HCT116 (cell line): ENCODE measurements at regions of chr22 and their contacts with region 1.

Region 1: GRCh38 chr22:30423982-30424963 is 1.3 kb upstream of the MTFP1 start:
- DNase-seq: peak; percentile 99
- ATAC-seq: peak; percentile 75
- H3K4me3 ChIP-seq: peak overlapping the region; percentile 82
- H3K27ac ChIP-seq: peak overlapping the region; percentile 98
- H3K4me1 ChIP-seq: peaks cover 42 to 74% of the 10 kb centered on the region in 2 experiments
- H3K27me3 ChIP-seq: no peaks in the 10 kb centered on the region
- CTCF ChIP-seq: peak in 2 of 3 experiments; percentile 25 to 27; a peak in 2 of 6 replicates
- POLR2A ChIP-seq: no peak
- RAD21 ChIP-seq: no peak

Region 2: DNA sequence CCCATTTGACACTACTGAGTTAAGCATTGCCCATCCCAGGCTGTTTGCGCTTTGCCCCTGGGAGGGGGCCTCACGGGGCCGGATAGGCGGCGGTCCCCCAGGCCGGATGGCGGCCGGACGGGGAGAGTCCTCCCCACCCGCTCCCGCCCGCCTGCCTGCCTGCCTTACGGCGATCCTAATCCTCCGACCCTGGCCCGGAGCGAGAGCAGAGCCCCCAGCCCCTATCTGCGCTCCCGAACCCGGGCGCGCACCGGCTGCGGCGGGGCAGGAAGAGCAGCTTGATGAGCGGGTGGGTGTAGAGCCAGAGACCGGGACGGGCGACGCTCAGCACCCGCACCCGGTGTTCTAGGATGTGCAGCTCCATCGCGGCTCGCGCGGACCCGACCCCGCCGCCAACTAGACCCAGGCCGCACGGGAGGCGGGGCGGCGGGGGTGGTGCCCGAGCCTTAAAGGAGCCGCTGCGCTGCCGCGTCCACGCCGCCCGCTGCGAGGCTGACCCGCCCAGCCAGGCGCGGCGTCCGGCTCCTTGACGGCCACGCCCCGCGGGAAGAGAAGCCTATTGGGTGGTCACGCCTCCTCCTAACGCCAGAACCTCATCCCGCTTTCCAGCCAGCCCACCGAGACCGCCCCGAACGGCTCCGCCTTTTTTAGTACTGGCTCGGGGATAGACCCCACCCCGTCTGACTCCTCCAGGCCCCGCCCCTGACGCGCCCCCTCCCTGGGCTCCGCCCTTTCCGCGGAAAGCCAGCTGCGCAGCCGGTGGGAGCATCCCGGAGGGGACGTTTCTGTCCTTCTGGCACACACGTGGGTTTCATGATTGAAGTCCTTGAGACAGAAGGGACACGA is 134.9 kb before region 1 on chr22 and contains the start of gene CASTOR1:
- CTCF ChIA-PET with region 1: interaction called, 12 read pairs
- POLR2A ChIA-PET with region 1: interaction called, 10 read pairs
- RAD21 ChIA-PET with region 1: interaction called, 3 to 6 read pairs
- intact Hi-C with region 1: loop called (anchors 5 kb)
- DNase-seq: peak; percentile 96
- ATAC-seq: peak; percentile 87
- H3K4me3 ChIP-seq: peak within 1 kb of the TSS; percentile 65 to 80
- H3K27ac ChIP-seq: peak within 1 kb of the TSS; percentile 53
- H3K4me1 ChIP-seq: peaks cover 37 to 54% of the 10 kb centered on the region in 2 experiments
- H3K27me3 ChIP-seq: no peaks in the 10 kb centered on the region
- CTCF ChIP-seq: no peak
- POLR2A ChIP-seq: no peak
- RAD21 ChIP-seq: no peak
- total RNA-seq, gene CASTOR1: 6.5 TPM

Region 3: DNA sequence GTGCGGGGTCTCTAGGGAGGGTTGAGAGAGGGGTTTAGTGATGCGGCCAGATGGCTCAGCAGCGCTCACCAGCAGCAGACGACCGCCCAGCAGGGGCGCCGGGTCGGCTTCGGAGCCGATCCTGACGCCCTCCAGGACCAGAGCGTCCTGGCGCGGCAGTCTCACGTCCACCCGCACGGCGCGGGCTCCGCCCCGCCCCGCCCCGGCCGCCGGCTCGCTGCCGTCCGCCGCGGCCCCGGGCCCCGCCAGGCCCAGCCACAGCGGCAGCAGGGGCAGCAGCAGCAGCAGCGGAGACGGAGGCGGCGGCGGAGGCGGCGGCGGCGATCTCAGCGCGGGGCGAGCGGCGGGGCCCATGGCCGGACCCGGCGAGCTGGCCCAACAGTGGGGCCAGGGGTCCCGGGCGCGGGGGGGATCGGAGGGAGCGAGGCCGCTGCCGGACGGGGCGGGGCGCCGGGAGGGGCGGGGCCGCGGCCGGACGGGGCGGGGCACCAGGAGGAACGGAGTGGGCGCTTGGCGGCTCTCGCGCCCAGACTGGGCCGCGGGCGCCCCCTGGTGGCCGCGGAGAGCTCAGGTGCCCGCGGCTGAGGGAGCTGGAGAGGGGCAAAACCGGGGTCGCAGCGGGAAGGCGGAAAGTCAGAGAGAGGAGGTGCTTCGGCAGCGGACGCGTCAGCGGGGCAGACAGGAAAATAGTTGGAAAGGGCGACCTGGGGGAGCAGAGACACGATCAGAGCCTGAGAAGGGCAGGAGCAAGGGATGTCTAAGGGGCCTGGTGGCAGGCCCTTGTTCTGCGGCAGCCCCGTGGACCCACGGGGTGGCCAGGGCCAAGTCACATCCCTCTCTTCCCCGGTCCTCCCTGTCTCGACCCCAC is 37.1 kb before region 1 on chr22 and contains the start of gene RNF215:
- CTCF ChIA-PET with region 1: interaction called, 12 read pairs
- POLR2A ChIA-PET with region 1: interaction called, 13 read pairs
- RAD21 ChIA-PET with region 1: interaction called, 4 read pairs
- intact Hi-C with region 1: loop called (anchors 1 kb)
- DNase-seq: peak; percentile 44
- ATAC-seq: peak; percentile 88
- H3K4me3 ChIP-seq: peak within 1 kb of the TSS; percentile 60 to 68
- H3K27ac ChIP-seq: peak within 1 kb of the TSS; percentile 69
- H3K4me1 ChIP-seq: peaks cover 3 to 31% of the 10 kb centered on the region in 2 experiments; a peak in 3 of 4 replicates
- H3K27me3 ChIP-seq: no peaks in the 10 kb centered on the region
- CTCF ChIP-seq: peak; percentile 77 to 78 (median 78)
- POLR2A ChIP-seq: no peak
- RAD21 ChIP-seq: peak; percentile 88
- total RNA-seq, gene RNF215: 20.2 TPM

Region 4: DNA sequence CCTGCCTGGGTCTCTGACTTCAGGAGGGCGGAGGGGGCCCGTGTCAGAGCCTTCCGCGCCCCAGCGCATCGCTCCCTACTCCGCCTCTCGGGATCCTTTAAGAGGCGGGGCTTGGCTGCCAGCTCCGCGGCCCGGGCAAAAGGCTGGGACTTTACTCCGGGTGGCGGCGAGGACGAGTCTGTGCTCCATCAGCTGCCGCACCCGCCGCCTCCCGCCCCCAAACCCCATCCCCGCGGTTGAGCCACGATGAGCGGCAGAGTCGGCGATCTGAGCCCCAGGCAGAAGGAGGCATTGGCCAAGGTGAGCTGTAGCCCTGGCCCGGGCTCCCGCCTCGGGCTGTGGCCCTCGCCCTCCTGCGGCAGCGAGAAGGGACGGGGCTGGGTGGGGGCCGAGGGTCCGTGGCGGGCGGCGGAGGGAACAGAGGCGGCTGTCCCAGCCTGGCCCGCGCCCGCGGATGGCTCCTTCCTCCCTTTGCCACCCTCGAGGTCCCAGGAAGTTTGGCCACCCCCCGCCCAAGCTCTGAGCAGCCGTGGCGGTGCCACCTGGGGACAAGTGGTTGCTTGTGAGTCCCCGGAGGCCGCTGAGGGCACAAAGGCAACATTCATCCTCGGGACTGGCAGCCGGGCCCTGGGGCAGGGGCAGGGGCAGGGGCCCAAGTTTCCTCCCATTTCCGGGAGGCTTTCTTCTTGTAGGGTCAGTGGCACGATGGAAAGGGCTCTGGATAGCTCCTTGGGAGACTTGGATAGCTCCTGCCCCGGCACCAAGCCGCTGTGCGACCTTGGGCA is 27.2 kb before region 1 on chr22 and contains the start of gene SEC14L2:
- CTCF ChIA-PET with region 1: interaction called, 6 read pairs
- POLR2A ChIA-PET with region 1: interaction called, 40 read pairs
- RAD21 ChIA-PET with region 1: interaction called in 1 of 2 experiments, 5 read pairs
- intact Hi-C with region 1: no loop called
- DNase-seq: peak; percentile 43
- ATAC-seq: peak; percentile 92
- H3K4me3 ChIP-seq: peak within 1 kb of the TSS; percentile 80 to 94
- H3K27ac ChIP-seq: peak within 1 kb of the TSS; percentile 57
- H3K4me1 ChIP-seq: peaks cover 17 to 54% of the 10 kb centered on the region in 2 experiments; a peak in 3 of 4 replicates
- H3K27me3 ChIP-seq: no peaks in the 10 kb centered on the region
- CTCF ChIP-seq: no peak
- POLR2A ChIP-seq: peak; percentile 47
- RAD21 ChIP-seq: no peak
- total RNA-seq, gene SEC14L2: 33.5 TPM

Region 5: DNA sequence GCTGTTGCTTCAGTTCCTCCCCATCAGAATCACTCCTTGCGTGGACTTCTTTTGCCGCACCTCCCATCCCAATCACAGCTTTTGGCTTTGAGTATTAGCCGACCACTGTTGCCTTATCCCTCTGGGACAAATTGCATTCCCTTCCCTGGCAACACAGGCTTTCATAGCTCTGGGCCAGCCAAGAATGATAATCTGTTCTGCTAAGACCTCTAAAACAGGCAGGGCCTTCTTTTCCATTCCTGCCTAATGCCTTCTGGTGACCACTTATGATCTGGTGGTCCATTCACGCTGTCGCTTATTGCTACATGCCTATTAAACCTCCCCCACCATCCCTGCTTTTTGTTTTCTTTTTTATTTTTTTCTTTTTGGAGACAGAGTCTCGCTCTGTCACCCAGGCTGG is 17.9 kb before region 1 on chr22:
- CTCF ChIA-PET with region 1: interaction called, 3 read pairs
- POLR2A ChIA-PET with region 1: interaction called, 10 read pairs
- RAD21 ChIA-PET with region 1: no interaction called
- intact Hi-C with region 1: no loop called
- DNase-seq: no peak
- ATAC-seq: no peak
- H3K4me3 ChIP-seq: no peak overlapping the region
- H3K27ac ChIP-seq: no peak overlapping the region
- H3K4me1 ChIP-seq: peaks cover 13 to 43% of the 10 kb centered on the region in 2 experiments
- H3K27me3 ChIP-seq: no peaks in the 10 kb centered on the region
- CTCF ChIP-seq: no peak
- POLR2A ChIP-seq: no peak
- RAD21 ChIP-seq: no peak

Region 6: GRCh38 chr22:30413745-30414524 is 10.3 kb before region 1 on chr22:
- CTCF ChIA-PET with region 1: no interaction called
- POLR2A ChIA-PET with region 1: interaction called, 23 read pairs
- RAD21 ChIA-PET with region 1: no interaction called
- intact Hi-C with region 1: no loop called
- DNase-seq: no peak
- ATAC-seq: no peak
- H3K4me3 ChIP-seq: no peak overlapping the region
- H3K27ac ChIP-seq: no peak overlapping the region
- H3K4me1 ChIP-seq: peaks cover 0 to 38% of the 10 kb centered on the region in 2 experiments; a peak in 2 of 4 replicates
- H3K27me3 ChIP-seq: no peaks in the 10 kb centered on the region
- CTCF ChIP-seq: no peak
- POLR2A ChIP-seq: no peak
- RAD21 ChIP-seq: no peak

Region 7: DNA sequence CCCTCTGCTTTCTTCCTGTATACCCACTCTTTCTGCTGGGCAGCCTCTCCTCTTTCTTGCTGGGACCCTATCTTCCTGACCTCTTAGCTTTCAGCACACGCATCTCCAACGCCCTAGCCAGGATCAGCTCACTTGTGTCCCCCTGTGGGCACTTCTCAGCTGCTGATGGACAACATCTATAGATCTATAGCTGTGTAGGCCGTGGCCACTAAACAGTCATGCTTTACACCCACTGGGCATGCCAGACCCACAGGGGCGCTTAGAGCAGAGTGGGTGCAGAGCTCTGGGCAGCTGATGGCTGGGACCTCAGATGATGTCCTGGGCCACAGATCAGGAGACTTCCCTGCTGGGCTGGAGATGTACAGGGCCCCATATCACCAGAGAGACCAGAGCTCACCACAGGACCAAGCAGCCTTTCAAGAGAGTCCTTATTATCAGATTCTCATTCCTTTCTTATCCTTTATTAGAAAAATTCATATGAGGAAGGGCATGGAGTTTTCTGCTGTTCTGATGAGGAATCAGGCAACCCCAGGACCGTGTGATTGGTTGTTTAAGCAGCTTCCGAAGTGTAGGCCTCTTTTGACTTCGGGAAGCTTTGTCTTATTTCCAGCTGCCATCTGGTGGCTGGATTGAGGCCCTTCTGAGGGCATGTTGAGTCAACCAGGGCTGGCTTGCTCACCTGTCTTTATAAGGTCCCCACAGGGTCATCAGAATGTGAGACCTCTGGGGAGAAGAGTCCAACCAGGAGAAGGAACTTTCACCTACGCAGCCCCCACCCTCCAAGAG is 330.9 kb after region 1 on chr22:
- CTCF ChIA-PET with region 1: no interaction called
- POLR2A ChIA-PET with region 1: no interaction called
- RAD21 ChIA-PET with region 1: no interaction called
- intact Hi-C with region 1: no loop called
- DNase-seq: peak; percentile 66
- ATAC-seq: peak; percentile 96
- H3K4me3 ChIP-seq: no peak overlapping the region
- H3K27ac ChIP-seq: no peak overlapping the region
- H3K4me1 ChIP-seq: peaks cover 0 to 6% of the 10 kb centered on the region in 2 experiments; a peak in 1 of 4 replicates
- H3K27me3 ChIP-seq: no peaks in the 10 kb centered on the region
- CTCF ChIP-seq: peak; percentile 80 to 87 (median 82)
- POLR2A ChIP-seq: no peak
- RAD21 ChIP-seq: peak; percentile 97